Prostate gland (tissue), 2 donors: ENCODE measurements at regions of chr16 and their contacts with region 1.

Region 1: DNA sequence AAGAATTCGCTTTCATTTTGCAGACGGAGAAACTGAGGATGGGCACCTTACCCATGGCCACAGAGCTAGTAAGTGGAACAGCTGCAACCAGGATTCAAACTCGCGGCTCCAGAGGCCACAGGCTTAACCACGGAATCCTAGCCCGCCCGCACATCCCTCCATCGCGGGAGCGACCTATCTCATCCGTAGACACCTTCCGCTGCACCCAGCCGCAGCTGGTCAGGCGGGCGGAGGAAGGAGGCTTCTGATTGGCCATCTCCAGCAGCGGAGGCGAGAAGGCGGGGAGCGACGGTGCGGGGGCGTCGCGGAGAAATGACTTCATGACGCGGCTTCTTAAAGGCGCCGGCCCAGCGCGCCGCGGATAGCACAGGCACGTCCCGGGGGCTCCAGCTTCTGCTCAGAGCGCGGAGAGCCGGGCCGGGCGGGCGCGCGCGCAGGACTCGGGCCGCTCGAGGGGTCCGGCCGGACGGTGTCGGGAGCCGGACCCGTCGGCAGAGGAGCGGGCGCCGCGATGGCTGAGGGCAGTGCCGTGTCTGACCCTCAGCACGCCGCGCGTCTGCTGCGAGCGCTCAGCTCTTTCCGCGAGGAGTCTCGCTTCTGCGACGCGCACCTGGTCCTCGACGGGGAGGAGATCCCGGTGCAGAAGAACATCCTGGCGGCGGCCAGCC is at the start of gene GAN:
- DNase-seq: peak; percentile 97
- H3K4me3 ChIP-seq: peak within 1 kb of the TSS; percentile 89 to 99
- H3K27ac ChIP-seq: peak within 1 kb of the TSS; percentile 93 to 96
- H3K4me1 ChIP-seq: peaks cover 7% of the 10 kb centered on the region
- H3K27me3 ChIP-seq: no peaks in the 10 kb centered on the region
- CTCF ChIP-seq: peak in 1 of 4 experiments; percentile 19
- POLR2A ChIP-seq: peak; percentile 97
- total RNA-seq, gene GAN: 8.2 to 10.1 TPM

Region 2: GRCh38 chr16:81035398-81035974 is 279.3 kb before region 1 on chr16 and contains the start of gene ATMIN:
- intact Hi-C with region 1: loop called (anchors 10 kb)
- DNase-seq: peak; percentile 85
- H3K4me3 ChIP-seq: peak within 1 kb of the TSS; percentile 77
- H3K27ac ChIP-seq: peak within 1 kb of the TSS; percentile 53 to 73
- H3K4me1 ChIP-seq: peaks cover 5% of the 10 kb centered on the region
- H3K27me3 ChIP-seq: no peaks in the 10 kb centered on the region
- CTCF ChIP-seq: peak; percentile 99 to 100 (median 100)
- POLR2A ChIP-seq: no peak
- total RNA-seq, gene ATMIN: 47.1 to 62.4 TPM

Region 3: DNA sequence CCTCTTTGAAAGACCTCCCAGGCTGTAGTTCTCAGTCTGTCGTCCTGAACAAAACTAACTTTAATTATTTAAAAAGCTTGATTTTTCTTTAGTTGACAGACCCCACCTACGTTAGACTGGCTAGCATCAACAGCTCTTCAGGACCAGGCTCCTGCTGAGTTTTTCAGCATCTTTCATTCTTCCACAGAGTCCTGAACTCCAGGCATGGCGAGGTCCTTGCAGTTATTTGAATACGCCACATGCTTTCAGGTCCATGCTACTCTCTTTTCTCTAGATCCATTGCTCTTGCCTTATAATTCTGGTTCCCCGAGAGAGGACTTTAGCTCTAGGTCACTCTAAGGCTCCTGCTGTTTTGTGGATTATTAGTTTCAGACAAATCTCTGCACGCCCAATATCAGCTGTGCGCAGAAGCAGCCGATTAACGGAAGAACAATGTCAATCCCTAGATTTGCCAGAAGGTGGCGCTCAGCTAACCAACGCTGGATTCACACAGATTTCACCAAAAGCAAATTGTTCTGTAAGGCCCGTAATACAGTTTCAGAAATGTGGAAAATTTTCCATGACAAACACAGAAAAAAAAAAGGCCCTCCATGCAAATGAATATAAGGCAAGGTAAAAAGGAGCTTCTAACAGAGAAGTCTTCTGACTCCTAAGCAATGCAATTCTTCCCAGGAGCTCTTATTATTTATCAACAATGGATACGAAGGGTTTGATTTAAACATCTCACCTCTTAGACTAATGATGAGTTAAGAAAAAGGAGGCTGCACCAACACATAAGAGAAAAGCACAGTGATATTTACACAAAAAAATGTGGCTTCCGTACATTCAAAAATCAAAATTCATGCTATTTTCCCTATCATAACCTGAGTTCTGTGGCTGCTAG is 109.7 kb before region 1 on chr16:
- intact Hi-C with region 1: loop called (anchors 5 kb)
- DNase-seq: no peak
- H3K4me3 ChIP-seq: no peak overlapping the region
- H3K27ac ChIP-seq: no peak overlapping the region
- H3K4me1 ChIP-seq: no peaks in the 10 kb centered on the region
- H3K27me3 ChIP-seq: no peaks in the 10 kb centered on the region
- CTCF ChIP-seq: peak; percentile 25 to 68 (median 42)
- POLR2A ChIP-seq: no peak

Region 4: GRCh38 chr16:81645266-81645694 is 330.5 kb after region 1 on chr16:
- intact Hi-C with region 1: no loop called
- DNase-seq: peak; percentile 91
- H3K4me3 ChIP-seq: peak overlapping the region in 1 of 2 donors; percentile 15
- H3K27ac ChIP-seq: peak overlapping the region; percentile 34 to 52
- H3K4me1 ChIP-seq: no peaks in the 10 kb centered on the region
- H3K27me3 ChIP-seq: no peaks in the 10 kb centered on the region
- CTCF ChIP-seq: no peak
- POLR2A ChIP-seq: peak; percentile 42